ENCODE measurements at regions of chr20 and their contacts with region 1.

Region 1: DNA sequence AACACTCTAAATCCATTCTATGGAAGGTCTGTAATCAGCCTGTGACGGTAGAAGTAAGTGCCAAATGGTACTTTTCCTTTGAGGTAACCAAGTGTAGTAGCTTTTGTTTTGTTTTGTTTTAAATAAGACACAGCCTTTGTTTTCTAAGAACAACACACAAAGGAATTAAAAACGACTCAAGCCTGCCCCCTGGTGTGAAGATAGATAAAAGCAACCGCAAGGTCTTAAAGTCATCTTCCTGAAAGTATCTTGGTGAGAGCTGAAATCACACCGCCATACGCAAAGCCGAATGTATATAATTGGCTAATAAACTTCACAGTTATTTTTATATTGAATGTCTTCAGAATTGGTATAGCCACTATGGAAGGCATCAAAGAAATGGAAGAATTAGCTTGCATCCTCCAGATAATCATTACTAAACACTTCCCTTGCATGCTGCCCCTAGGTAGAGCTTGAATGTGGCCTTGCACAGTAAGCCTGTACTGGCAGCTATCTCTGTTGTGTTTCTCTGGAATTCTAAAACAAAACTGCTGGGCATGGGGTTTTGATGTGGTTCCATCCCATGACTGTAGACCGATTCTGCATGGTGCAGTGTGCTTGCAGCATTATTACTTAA is 95.6 kb downstream of the LAMP5 start:
- DNase-seq: peak; percentile 75
- ATAC-seq: peak; percentile 45

Region 2: GRCh38 chr20:9412309-9412708 is 197.7 kb before region 1 on chr20:
- intact Hi-C with region 1: loop called (anchors 5 kb)
- DNase-seq: no peak
- ATAC-seq: no peak

Region 3: DNA sequence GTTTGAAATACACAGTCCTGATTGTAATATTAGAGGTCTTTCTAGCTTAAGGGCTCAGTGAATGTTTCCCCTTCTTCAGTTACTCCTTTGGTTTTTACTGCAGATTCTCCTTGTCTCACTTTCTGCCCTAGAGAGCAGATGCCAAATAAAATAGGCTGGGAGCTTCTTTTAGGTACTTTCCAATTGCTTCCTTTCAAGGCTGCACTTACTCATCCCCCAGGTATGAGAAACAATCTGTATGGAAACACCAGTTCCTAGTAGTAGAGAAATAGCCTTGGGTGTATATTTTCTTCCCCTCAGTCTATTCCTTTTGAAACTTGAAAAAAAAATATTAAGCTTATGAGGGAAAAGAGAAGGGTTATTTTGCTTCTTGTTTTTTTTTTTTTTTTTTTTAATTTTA is 89.2 kb after region 1 on chr20:
- intact Hi-C with region 1: no loop called
- DNase-seq: no peak
- ATAC-seq: no peak

Region 4: GRCh38 chr20:10022625-10023024 is 412.6 kb after region 1 on chr20:
- intact Hi-C with region 1: no loop called
- DNase-seq: no peak
- ATAC-seq: no peak

Measured in sciatic nerve (tissue), 2 donors.